CD4-positive, alpha-beta T cell (primary cell): ENCODE measurements at regions of chr16 and their contacts with region 1.

Region 1: DNA sequence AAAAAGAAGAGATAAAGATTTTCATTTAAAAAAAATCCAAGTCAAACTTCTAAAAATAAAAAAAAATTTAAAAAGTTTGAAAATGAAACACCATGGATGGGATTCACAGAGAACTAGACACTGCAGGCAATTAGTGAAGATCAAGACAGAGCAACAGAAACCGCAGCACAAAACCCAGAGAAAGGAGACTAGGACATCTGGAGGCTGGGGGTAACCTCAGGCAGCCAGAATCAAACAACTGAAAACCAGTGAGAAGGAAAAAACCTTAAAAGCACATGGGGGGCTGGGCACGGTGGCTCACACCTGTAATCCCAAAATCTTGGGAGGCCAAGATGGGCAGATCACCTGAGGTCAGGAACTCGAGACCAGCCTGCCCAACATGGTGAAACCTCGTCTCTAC is 30.6 kb downstream of the LITAFD start:
- DNase-seq: no peak
- ATAC-seq: no peak
- H3K4me3 ChIP-seq: no peak overlapping the region
- H3K4me3 Mint-ChIP-seq: no peak overlapping the region
- H3K27ac ChIP-seq: no peak overlapping the region
- H3K27ac Mint-ChIP-seq: peak overlapping the region; percentile 29
- H3K4me1 ChIP-seq: peaks cover 16% of the 10 kb centered on the region
- H3K4me1 Mint-ChIP-seq: peaks cover 27% of the 10 kb centered on the region
- H3K27me3 ChIP-seq: no peaks in the 10 kb centered on the region
- H3K27me3 Mint-ChIP-seq: no peaks in the 10 kb centered on the region
- CTCF ChIP-seq: no peak

Region 2: DNA sequence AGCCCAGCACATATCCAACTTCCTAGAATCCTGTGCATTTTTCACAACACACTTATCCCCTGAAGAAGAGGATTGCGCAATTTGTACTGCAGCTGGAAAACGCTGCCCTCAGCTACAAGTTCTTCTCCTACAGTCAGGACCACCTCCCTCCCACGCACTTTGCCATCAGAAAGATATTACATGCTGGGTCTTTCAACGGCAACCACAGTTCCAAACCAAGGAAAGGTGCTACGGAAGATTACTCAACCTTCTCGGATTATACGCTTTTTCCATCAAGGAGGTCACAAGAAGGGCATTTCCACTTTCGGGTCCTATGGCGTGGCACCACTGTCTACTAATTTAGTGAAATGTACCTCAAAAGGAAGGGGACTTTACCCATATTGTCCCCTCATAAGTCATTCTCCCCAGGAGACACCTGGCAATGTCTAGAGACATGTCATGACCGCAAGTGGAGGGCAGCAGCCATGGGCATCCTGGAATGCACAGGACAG is 15.7 kb after region 1 on chr16:
- CTCF ChIA-PET with region 1: no interaction called
- POLR2A ChIA-PET with region 1: no interaction called
- intact Hi-C with region 1: loop called in 1 of 2 experiments (anchors 2 kb)
- DNase-seq: no peak
- ATAC-seq: no peak
- H3K4me3 ChIP-seq: no peak overlapping the region
- H3K4me3 Mint-ChIP-seq: no peak overlapping the region
- H3K27ac ChIP-seq: no peak overlapping the region
- H3K27ac Mint-ChIP-seq: no peak overlapping the region
- H3K4me1 ChIP-seq: peaks cover 17% of the 10 kb centered on the region
- H3K4me1 Mint-ChIP-seq: peaks cover 55% of the 10 kb centered on the region
- H3K27me3 ChIP-seq: no peaks in the 10 kb centered on the region
- H3K27me3 Mint-ChIP-seq: no peaks in the 10 kb centered on the region
- CTCF ChIP-seq: no peak